Motor neuron (in vitro differentiated cells): ENCODE measurements at regions of chr14 and their contacts with region 1.

Region 1: GRCh38 chr14:36070031-36070719 is 106.3 kb downstream of the PTCSC3 start:
- ATAC-seq: peak; percentile 66 to 95 (median 85)
- H3K4me3 ChIP-seq: no peak overlapping the region
- H3K27ac ChIP-seq: no peak overlapping the region
- H3K4me1 ChIP-seq: peaks cover 7 to 27% of the 10 kb centered on the region in 2 donors

Region 2: DNA sequence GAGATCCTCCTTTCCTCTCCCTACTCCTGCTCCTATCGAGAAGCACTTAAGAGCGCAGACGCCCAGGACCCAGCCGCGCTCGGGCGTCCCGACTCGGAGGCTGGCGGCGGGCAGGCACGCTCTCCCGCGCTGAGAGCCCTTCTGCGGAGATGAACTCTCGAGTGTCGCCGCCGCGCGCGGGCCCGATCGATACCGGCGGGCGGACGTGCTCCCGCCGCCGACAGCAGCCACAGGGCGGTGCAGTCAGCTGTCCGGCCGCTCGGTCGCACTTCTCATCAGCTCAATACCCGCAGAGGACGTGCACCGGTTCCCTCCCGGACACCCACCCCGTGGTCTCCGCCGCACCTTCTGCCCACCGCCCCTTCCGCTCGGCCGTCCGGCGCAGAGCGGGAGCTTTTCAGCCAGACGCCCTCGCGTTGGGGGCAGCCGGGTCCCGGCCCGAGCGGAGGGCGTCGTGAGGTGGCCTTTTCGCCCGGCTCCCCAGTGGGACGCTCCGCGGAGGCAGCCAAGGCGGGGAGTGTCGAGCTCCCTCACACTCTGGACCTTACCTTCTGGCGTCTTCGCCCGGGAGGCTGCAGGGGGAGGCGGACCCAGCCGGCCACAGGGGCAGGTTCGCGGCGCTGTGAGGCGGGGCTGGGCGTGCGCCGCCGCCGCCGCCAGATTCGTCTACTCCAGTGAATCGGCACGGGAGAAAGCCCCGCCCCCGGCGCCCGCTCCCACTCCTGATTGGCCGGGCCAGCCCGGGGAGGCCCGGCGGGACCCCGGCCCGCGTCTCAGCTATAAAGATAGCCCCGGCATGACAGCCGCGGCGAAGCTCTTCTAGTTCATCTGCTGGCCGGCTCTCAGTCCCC is 536.6 kb before region 1 on chr14 and contains the start of gene INSM2:
- in situ Hi-C with region 1: no loop called
- ATAC-seq: peak; percentile 77 to 93 (median 90)
- H3K4me3 ChIP-seq: peak within 1 kb of the TSS; percentile 44 to 55 (median 49)
- H3K27ac ChIP-seq: no peak within 1 kb of the TSS
- H3K4me1 ChIP-seq: peaks cover 6 to 12% of the 10 kb centered on the region in 2 donors
- total RNA-seq, gene INSM2: 0.10 to 6.8 (median 0.33) TPM in 7 of 8 experiments, not detected in the other

Region 3: GRCh38 chr14:35883677-35884293 is 186.4 kb before region 1 on chr14:
- in situ Hi-C with region 1: loop called in 2 of 9 experiments (anchors 25 kb)
- ATAC-seq: peak in 3 of 8 experiments; percentile 18 to 57 (median 53)
- H3K4me3 ChIP-seq: no peak overlapping the region
- H3K27ac ChIP-seq: no peak overlapping the region
- H3K4me1 ChIP-seq: no peaks in the 10 kb centered on the region

Region 4: GRCh38 chr14:36383674-36384431 is 313.7 kb after region 1 on chr14:
- in situ Hi-C with region 1: loop called in 1 of 9 experiments (anchors 25 kb)
- ATAC-seq: peak in 4 of 8 experiments; percentile 40 to 95 (median 68)
- H3K4me3 ChIP-seq: no peak overlapping the region
- H3K27ac ChIP-seq: peak overlapping the region in 1 of 2 donors; percentile 30
- H3K4me1 ChIP-seq: peaks cover 0 to 15% of the 10 kb centered on the region in 2 donors

Region 5: DNA sequence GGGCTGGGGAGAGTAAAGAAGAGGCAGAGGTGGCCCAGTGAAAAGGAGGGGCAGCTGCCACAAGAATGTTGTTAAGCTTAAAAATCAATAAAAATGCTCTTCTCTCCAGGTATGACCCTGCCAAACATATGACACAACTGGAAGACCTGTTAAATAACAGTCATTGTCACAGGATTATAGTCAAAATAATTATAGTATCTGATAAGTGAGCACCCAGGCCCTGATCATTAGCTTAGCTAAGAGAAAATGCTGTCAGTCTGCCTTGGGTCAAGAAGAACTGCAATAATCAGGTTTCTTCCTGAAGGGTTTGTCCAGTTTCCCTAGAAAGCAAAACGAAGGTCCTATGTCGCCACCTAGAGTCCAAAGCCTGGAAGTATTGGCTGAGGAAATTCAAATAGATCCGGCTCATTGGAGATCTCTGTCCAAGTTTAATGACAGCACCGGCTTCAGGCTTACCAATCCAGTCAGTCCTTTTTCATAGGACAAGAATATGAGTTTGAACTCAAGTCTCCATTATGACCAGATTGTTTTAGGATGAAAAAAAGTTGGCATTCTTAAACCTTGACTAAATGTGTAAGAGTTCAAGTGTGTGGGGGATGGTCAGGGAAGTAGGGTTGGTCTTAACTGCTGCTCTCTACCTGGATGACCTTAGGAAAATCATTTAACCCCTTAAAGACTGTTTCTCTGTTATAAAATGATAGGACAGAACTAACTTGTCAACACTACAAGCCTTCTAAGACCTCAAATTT is 534.8 kb after region 1 on chr14:
- in situ Hi-C with region 1: loop called in 1 of 9 experiments (anchors 25 kb)
- ATAC-seq: peak; percentile 58 to 87 (median 78)
- H3K4me3 ChIP-seq: no peak overlapping the region
- H3K27ac ChIP-seq: no peak overlapping the region
- H3K4me1 ChIP-seq: peaks cover 0 to 6% of the 10 kb centered on the region in 2 donors